ENCODE measurements at regions of chr16 and their contacts with region 1.

Region 1: DNA sequence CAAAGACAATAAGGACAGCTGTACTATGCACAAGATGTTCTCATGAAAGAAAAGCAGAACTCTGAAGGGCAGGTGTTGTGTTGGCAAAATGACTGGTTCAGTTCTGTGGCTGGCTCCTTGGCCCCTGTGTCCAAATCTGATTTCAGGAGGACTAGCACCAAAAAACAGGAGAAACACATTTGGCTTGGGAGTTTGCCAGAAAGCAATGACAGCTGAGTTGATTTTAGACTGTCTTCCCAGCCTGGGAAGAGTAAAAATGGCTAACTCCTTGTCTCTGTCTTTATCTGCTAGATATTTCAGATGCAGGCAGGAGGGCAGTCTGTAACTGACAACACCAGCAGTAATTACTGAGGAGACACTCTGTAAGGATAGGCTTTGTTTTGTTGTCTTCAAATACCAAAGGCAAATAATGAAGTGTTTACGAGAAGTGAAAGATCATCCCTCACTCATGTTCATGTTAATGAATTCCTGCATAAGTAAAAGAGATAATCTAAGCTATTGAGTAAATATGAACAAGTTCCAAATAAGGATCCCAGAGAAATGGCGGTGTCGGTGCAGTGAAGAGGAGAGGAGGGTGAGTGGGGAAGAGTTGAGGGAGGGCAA is 989.0 kb downstream of the CDH11 start:
- DNase-seq: no peak
- ATAC-seq: peak in 1 of 2 donors; percentile 45
- H3K4me3 ChIP-seq: no peak overlapping the region
- H3K27ac ChIP-seq: no peak overlapping the region
- H3K4me1 ChIP-seq: no peaks in the 10 kb centered on the region
- H3K27me3 ChIP-seq: no peaks in the 10 kb centered on the region
- CTCF ChIP-seq: no peak
- POLR2A ChIP-seq: no peak

Region 2: DNA sequence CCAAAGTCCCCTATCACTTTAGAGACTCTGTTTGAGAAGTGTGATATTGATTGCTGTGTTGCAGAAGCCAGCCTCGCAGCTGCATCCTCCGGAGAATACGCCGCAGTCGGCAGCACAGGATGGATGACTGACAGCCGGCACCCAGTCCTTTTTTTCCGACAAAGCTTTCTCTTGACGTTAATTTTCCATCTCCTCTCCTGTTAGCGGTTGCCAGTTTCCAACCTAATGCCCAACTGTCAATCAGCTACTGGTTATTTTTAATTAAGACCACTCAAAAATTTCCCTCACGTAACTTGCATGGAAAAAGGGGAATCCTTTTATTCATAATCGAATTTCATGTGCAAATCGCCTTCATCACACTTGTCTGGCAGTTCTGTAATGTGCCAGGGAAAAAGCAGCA is 35.1 kb after region 1 on chr16:
- in situ Hi-C with region 1: no loop called
- intact Hi-C with region 1: no loop called
- DNase-seq: no peak
- ATAC-seq: no peak
- H3K4me3 ChIP-seq: no peak overlapping the region
- H3K27ac ChIP-seq: no peak overlapping the region
- H3K4me1 ChIP-seq: no peaks in the 10 kb centered on the region
- H3K27me3 ChIP-seq: no peaks in the 10 kb centered on the region
- CTCF ChIP-seq: no peak
- POLR2A ChIP-seq: no peak

Region 3: GRCh38 chr16:64206862-64207261 is 74.0 kb after region 1 on chr16:
- in situ Hi-C with region 1: no loop called
- intact Hi-C with region 1: no loop called
- DNase-seq: no peak
- ATAC-seq: no peak
- H3K4me3 ChIP-seq: no peak overlapping the region
- H3K27ac ChIP-seq: no peak overlapping the region
- H3K4me1 ChIP-seq: no peaks in the 10 kb centered on the region
- H3K27me3 ChIP-seq: no peaks in the 10 kb centered on the region
- CTCF ChIP-seq: no peak
- POLR2A ChIP-seq: no peak

Region 4: GRCh38 chr16:64397945-64398508 is 265.2 kb after region 1 on chr16:
- in situ Hi-C with region 1: no loop called
- intact Hi-C with region 1: no loop called
- DNase-seq: no peak
- ATAC-seq: no peak
- H3K4me3 ChIP-seq: no peak overlapping the region
- H3K27ac ChIP-seq: no peak overlapping the region
- H3K4me1 ChIP-seq: no peaks in the 10 kb centered on the region
- H3K27me3 ChIP-seq: no peaks in the 10 kb centered on the region
- CTCF ChIP-seq: no peak
- POLR2A ChIP-seq: no peak

Region 5: DNA sequence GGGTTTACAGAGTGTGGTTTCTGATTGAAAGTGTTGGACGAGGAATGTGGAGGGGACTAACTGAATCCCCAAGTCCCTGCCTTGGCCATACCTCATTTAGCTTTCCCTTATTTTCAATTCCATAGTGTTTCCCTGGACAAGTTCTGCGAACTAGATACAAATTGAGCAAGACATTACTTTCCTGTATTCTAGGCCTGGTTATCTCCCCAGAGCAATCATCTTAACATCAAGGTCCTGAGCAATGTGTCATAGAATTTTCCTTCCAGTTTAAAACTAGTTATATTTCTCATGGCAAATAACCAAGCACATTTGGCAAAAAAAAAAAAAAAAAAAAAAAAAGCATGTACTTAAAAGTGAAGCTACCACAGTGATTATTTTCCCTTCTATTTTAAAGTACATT is 658.9 kb after region 1 on chr16:
- in situ Hi-C with region 1: no loop called
- intact Hi-C with region 1: loop called (anchors 10 kb)
- DNase-seq: no peak
- ATAC-seq: no peak
- H3K4me3 ChIP-seq: no peak overlapping the region
- H3K27ac ChIP-seq: no peak overlapping the region
- H3K4me1 ChIP-seq: no peaks in the 10 kb centered on the region
- H3K27me3 ChIP-seq: no peaks in the 10 kb centered on the region
- CTCF ChIP-seq: no peak
- POLR2A ChIP-seq: no peak

Region 6: GRCh38 chr16:65704866-65705265 is 1572.0 kb after region 1 on chr16:
- in situ Hi-C with region 1: no loop called
- intact Hi-C with region 1: no loop called
- DNase-seq: no peak
- ATAC-seq: no peak
- H3K4me3 ChIP-seq: no peak overlapping the region
- H3K27ac ChIP-seq: no peak overlapping the region
- H3K4me1 ChIP-seq: no peaks in the 10 kb centered on the region
- H3K27me3 ChIP-seq: no peaks in the 10 kb centered on the region
- CTCF ChIP-seq: no peak
- POLR2A ChIP-seq: no peak

Measured in gastrocnemius medialis (tissue), 4 donors.